ENCODE measurements at regions of chr1 and their contacts with region 1.

Region 1: DNA sequence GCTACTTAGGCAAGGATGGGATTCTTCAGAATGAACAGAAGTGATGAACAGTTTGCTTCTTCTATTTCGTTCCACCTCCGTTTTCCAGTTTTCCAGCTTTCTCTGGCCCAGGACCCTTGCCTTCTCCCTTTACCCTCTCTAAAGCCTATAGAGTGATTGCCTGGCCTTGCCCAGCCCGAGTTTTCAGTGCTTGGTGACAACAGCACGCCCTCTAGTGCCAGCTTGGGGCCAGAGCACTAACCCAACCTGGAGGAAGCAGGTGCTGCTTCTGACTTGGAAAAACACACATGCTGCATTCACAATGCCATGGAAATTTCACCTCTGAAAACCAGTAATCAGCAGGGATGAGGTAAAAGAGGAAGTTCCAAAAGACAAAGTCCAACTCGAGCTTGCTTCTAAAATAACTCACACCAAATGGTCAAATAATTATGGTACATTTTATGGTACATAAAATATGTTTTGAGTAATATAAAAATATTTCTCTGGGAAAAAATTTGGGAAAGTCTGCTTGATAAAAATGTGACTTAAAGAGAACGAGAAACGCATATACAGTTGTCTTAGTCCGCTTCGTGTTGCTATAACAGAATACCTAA is 26.1 kb downstream of the UBE2T start:
- DNase-seq: peak; percentile 62 to 83 (median 72)
- ATAC-seq: peak; percentile 96
- H3K4me3 ChIP-seq: no peak overlapping the region
- H3K4me3 Mint-ChIP-seq: no peak overlapping the region
- H3K27ac ChIP-seq: no peak overlapping the region
- H3K27ac Mint-ChIP-seq: no peak overlapping the region
- H3K4me1 ChIP-seq: no peaks in the 10 kb centered on the region
- H3K4me1 Mint-ChIP-seq: no peaks in the 10 kb centered on the region
- H3K27me3 ChIP-seq: peaks cover 0 to 2% of the 10 kb centered on the region in 2 experiments
- H3K27me3 Mint-ChIP-seq: peaks cover 5% of the 10 kb centered on the region
- CTCF ChIP-seq: peak; percentile 98

Region 2: DNA sequence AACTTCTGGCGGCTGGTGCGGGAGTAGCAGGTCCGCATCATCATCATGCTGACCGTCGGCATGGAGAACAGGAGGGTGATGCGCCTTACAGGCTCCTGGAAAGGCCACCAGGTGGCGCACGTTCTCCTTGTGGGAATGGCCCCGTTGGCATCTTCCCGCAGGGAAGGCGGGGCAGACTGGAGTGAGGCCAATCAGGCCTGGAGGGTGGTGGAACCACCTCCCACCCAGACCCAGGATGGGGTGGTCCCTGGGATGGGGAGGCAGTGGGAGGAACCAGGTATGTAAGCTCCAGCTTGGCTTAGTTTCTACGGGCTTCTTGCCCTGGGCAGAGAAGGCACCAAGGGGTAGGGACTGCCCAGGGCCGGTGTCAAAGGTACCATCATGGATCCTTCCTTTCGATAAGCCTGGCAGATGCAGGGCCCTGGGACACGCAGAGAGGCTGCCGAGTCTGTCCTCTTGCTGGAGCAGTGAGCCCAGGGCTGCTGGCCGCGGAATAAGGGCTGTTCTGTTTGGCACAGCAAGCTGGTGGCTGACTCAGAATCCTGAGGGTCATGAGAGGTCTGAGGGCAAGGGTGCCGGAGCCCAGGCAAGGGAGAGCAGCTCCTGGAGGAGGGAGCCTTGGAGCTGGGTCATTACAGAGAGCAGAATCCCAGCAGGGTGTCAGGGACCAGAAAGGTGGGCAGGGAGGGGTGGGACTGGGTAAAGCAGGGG is 130.8 kb before region 1 on chr1:
- CTCF ChIA-PET with region 1: interaction called, 10 read pairs
- POLR2A ChIA-PET with region 1: no interaction called
- intact Hi-C with region 1: loop called in 1 of 2 experiments (anchors 1 kb)
- DNase-seq: peak; percentile 46 to 84 (median 58)
- ATAC-seq: peak; percentile 58
- H3K4me3 ChIP-seq: no peak overlapping the region
- H3K4me3 Mint-ChIP-seq: no peak overlapping the region
- H3K27ac ChIP-seq: no peak overlapping the region
- H3K27ac Mint-ChIP-seq: no peak overlapping the region
- H3K4me1 ChIP-seq: peaks cover 7% of the 10 kb centered on the region
- H3K4me1 Mint-ChIP-seq: peaks cover 14% of the 10 kb centered on the region
- H3K27me3 ChIP-seq: no peaks in the 10 kb centered on the region
- H3K27me3 Mint-ChIP-seq: no peaks in the 10 kb centered on the region
- CTCF ChIP-seq: peak; percentile 84

Region 3: DNA sequence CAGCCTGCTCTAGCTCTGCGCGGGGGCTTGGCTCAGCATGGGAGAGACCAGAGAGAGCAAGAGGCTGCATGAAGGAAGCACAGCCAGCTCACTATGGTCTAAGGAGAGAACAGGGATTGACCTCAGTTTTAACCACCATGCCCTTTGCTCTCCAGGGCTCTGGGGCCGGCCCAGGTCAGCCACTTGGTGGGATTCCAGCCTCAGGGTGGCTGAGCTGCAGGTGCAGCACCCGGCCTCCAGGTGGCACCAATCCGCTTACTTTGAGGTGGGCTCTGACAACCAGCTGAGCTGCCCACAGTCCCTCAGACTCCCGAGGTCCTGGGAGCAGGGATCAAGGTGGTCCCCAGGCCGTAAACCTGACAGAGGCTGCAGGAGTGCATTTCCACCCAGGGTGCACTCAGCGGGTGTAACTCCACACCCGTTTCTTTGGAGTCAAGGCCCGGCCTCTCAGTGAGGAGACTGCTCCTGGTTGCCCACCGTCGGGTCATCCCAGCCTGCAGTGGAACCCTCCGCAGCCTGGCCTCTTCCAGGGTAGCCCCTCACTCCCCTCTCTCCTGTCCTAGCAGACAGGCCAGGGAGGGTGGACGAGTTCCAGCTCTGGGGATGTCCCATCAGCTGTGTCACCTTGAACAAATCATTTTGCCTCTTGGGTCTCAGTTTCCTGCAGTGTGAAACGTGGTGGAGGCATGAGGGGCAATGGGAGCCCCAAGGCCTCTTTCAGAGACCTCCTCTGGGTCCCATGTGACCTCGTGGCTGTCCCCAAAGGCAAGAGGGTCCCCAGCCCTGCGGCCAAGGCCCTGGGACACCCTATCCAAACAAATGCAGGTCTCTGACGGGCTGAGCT is 122.7 kb before region 1 on chr1:
- CTCF ChIA-PET with region 1: interaction called, 10 read pairs
- POLR2A ChIA-PET with region 1: interaction called, 3 read pairs
- intact Hi-C with region 1: loop called (anchors 1 kb)
- DNase-seq: peak; percentile 31 to 73 (median 45)
- ATAC-seq: peak; percentile 69
- H3K4me3 ChIP-seq: no peak overlapping the region
- H3K4me3 Mint-ChIP-seq: no peak overlapping the region
- H3K27ac ChIP-seq: no peak overlapping the region
- H3K27ac Mint-ChIP-seq: no peak overlapping the region
- H3K4me1 ChIP-seq: peaks cover 11% of the 10 kb centered on the region
- H3K4me1 Mint-ChIP-seq: peaks cover 8% of the 10 kb centered on the region
- H3K27me3 ChIP-seq: peaks cover 20% of the 10 kb centered on the region in 2 experiments
- H3K27me3 Mint-ChIP-seq: peaks cover 35% of the 10 kb centered on the region
- CTCF ChIP-seq: peak; percentile 88

Region 4: GRCh38 chr1:202235856-202236837 is 79.5 kb before region 1 on chr1:
- CTCF ChIA-PET with region 1: no interaction called
- POLR2A ChIA-PET with region 1: no interaction called
- intact Hi-C with region 1: loop called in 1 of 2 experiments (anchors 1 kb)
- DNase-seq: peak; percentile 38 to 75 (median 56)
- ATAC-seq: peak; percentile 77
- H3K4me3 ChIP-seq: no peak overlapping the region
- H3K4me3 Mint-ChIP-seq: no peak overlapping the region
- H3K27ac ChIP-seq: no peak overlapping the region
- H3K27ac Mint-ChIP-seq: no peak overlapping the region
- H3K4me1 ChIP-seq: no peaks in the 10 kb centered on the region
- H3K4me1 Mint-ChIP-seq: no peaks in the 10 kb centered on the region
- H3K27me3 ChIP-seq: peaks cover 9 to 15% of the 10 kb centered on the region in 2 experiments
- H3K27me3 Mint-ChIP-seq: peaks cover 30% of the 10 kb centered on the region
- CTCF ChIP-seq: peak; percentile 85

Region 5: DNA sequence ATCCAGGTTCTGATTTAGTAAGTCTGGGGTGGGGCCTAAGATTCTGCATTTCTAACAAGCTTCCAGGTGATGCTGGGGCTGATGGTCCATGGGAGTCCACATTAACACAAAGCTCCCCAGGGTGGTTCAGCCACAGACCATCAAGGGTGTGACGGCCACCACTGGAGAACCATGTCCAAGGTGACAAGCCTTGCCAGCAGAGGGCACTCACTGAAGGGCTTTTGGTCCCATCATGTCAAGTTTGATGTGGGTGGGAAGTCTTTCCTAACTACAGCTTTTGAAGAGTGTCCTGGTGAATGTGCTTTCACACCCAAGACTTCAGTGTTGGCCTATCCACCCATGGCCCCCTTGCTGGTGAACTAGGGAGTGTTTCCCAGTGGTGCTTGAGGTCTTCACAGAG is 41.1 kb before region 1 on chr1:
- CTCF ChIA-PET with region 1: interaction called, 9 read pairs
- POLR2A ChIA-PET with region 1: interaction called, 7 read pairs
- intact Hi-C with region 1: loop called (anchors 1 kb)
- DNase-seq: peak; percentile 12 to 64 (median 40)
- ATAC-seq: no peak
- H3K4me3 ChIP-seq: no peak overlapping the region
- H3K4me3 Mint-ChIP-seq: no peak overlapping the region
- H3K27ac ChIP-seq: no peak overlapping the region
- H3K27ac Mint-ChIP-seq: no peak overlapping the region
- H3K4me1 ChIP-seq: no peaks in the 10 kb centered on the region
- H3K4me1 Mint-ChIP-seq: no peaks in the 10 kb centered on the region
- H3K27me3 ChIP-seq: no peaks in the 10 kb centered on the region
- H3K27me3 Mint-ChIP-seq: peaks cover 24% of the 10 kb centered on the region
- CTCF ChIP-seq: peak; percentile 58

Measured in CD4-positive, alpha-beta T cell (primary cell).